ENCODE measurements at regions of chr2 and their contacts with region 1.

Region 1: GRCh38 chr2:173402405-173402974 is 47.8 kb downstream of the CDCA7 start:
- DNase-seq: peak; percentile 85
- H3K4me3 Mint-ChIP-seq: no peak overlapping the region
- H3K27ac Mint-ChIP-seq: no peak overlapping the region
- H3K4me1 Mint-ChIP-seq: peaks cover 6% of the 10 kb centered on the region
- H3K27me3 Mint-ChIP-seq: peaks cover 53% of the 10 kb centered on the region

Region 2: GRCh38 chr2:173432049-173432754 is 29.7 kb after region 1 on chr2:
- CTCF ChIA-PET with region 1: interaction called, 3 read pairs
- intact Hi-C with region 1: loop called (anchors 1 kb)
- DNase-seq: no peak
- H3K4me3 Mint-ChIP-seq: no peak overlapping the region
- H3K27ac Mint-ChIP-seq: no peak overlapping the region
- H3K4me1 Mint-ChIP-seq: peaks cover 18% of the 10 kb centered on the region
- H3K27me3 Mint-ChIP-seq: peaks cover 21% of the 10 kb centered on the region

Region 3: GRCh38 chr2:173571021-173571882 is 168.8 kb after region 1 on chr2:
- CTCF ChIA-PET with region 1: interaction called, 4 read pairs
- intact Hi-C with region 1: loop called (anchors 1 kb)
- DNase-seq: peak; percentile 8
- H3K4me3 Mint-ChIP-seq: no peak overlapping the region
- H3K27ac Mint-ChIP-seq: no peak overlapping the region
- H3K4me1 Mint-ChIP-seq: peaks cover 4% of the 10 kb centered on the region
- H3K27me3 Mint-ChIP-seq: peaks cover 6% of the 10 kb centered on the region

Region 4: GRCh38 chr2:174039551-174040416 is 637.3 kb after region 1 on chr2:
- CTCF ChIA-PET with region 1: no interaction called
- intact Hi-C with region 1: loop called (anchors 10 kb)
- DNase-seq: peak; percentile 92
- H3K4me3 Mint-ChIP-seq: peak overlapping the region; percentile 35
- H3K27ac Mint-ChIP-seq: peak overlapping the region; percentile 86
- H3K4me1 Mint-ChIP-seq: peaks cover 13% of the 10 kb centered on the region
- H3K27me3 Mint-ChIP-seq: no peaks in the 10 kb centered on the region

Measured in activated naive CD4-positive, alpha-beta T cell treated with anti-CD3 and anti-CD28 coated beads for 36 hours (primary cell).